OCI-LY7 (cell line): ENCODE measurements at regions of chr2 and their contacts with region 1.

Region 1: GRCh38 chr2:196171248-196171871 is at the start of gene STK17B:
- DNase-seq: peak; percentile 97
- H3K4me3 ChIP-seq: peak within 1 kb of the TSS; percentile 98
- H3K27ac ChIP-seq: peak within 1 kb of the TSS; percentile 99
- H3K4me1 ChIP-seq: peaks cover 37% of the 10 kb centered on the region
- CTCF ChIP-seq: no peak
- total RNA-seq, gene STK17B: 87.4 and 95.0 TPM in 2 replicates

Region 2: DNA sequence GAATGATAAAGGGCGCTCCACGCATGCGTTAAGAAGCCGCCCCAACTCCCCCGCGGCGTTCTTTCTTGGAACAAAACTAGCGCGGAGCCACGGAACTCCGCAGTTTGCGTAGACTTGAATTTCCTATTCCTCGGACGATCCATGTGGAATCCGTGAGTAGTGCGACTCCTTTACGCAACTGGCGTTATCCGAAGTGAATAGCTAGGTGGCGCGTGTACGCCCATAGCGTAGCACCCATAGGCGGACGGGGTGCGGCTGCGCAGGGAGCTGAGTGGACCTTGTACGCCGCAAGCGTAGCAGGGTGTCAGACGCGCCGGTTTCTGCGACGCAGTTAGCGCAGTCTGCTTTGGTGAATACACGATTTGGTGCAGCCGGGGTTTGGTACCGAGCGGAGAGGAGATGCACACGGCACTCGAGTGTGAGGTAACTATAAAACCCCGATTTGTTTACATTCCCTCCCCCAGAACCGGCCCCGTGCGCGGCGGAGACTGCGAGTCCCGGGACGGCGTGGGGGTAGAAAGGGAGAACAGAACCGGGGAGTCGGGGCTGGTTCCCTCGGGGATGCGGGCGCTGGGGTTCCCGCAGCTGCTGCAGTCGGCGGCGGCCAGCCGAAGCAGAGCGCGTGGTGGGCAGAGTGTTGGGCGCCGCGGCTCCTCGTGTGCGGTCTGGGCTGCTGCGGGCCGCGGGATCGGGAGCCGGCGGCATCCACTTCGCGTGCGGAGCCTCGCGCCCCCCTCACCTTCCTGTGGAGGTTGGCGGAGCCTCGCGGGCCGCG is 514.3 kb before region 1 on chr2 and contains the start of gene SLC39A10:
- CTCF ChIA-PET with region 1: no interaction called
- POLR2A ChIA-PET with region 1: no interaction called
- intact Hi-C with region 1: loop called (anchors 5 kb)
- DNase-seq: peak; percentile 97
- H3K4me3 ChIP-seq: peak within 1 kb of the TSS; percentile 93
- H3K27ac ChIP-seq: peak within 1 kb of the TSS; percentile 66
- H3K4me1 ChIP-seq: peaks cover 21% of the 10 kb centered on the region
- CTCF ChIP-seq: peak; percentile 35; the same call in 1 of the 2 replicates
- total RNA-seq, gene SLC39A10: 14.7 and 19.6 TPM in 2 replicates

Region 3: DNA sequence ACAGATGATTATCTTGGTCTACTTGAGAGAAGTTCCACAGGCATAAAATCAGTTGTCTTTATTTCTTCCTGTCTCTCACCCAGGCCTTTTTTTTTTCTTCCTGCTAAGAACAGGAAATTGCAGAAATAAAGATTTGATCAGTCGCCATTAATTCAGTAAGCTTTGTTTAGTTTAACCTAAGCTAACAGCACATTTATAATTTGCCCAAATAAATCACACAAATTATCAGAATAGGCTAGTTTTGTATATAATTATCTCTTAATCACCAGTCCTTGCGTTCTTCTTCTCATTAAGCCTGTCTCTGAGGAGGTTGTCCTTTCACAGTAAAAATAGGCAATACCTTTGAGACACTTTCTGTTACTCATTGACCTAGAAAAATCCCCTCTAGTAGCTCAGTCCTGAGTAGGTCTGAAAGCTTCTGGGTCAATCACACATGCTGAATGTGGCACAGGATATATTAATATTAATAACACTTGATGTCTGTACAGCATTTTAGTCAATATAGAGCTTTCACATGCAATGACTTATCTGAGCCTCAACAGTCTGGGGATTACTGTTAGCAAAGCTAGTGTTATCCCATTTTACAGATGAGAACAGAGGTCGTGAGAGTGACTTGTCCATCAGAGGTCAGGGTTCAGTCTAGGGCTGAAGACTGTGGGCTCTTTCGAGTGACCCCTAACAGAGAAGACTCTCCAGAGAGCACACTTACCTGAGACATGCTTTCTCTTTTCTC is 11.2 kb after region 1 on chr2:
- CTCF ChIA-PET with region 1: no interaction called
- POLR2A ChIA-PET with region 1: interaction called, 110 read pairs
- intact Hi-C with region 1: no loop called
- DNase-seq: peak; percentile 60
- H3K4me3 ChIP-seq: peak overlapping the region; percentile 31
- H3K27ac ChIP-seq: peak overlapping the region; percentile 82
- H3K4me1 ChIP-seq: peaks cover 98% of the 10 kb centered on the region
- CTCF ChIP-seq: no peak

Region 4: DNA sequence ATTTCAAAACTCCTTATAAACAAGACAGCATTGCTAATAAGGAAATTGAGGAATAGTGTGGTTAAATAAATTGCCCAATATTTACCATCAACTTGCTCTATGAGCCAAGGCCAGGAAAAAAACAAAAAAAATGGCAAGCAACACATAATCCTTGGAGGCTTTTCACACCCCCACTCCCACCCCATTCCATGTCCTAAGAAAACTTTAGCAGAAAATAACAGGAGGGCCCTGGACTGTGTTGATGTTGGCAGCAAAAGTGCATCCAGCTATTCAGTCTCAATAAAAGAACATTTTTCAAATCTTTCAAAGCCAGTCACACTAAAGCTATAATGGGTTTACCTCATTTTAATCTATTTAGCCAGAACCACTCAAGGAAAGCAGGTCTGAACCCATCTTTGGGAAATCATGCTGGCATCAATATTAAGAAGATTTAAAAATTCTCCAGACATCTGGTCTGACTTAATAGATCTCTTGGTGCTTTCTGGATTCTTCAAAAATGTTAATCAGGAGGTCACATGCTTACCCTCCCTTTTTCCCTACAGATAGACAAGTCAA is 34.6 kb after region 1 on chr2:
- CTCF ChIA-PET with region 1: interaction called, 3 read pairs
- POLR2A ChIA-PET with region 1: interaction called, 33 read pairs
- intact Hi-C with region 1: loop called (anchors 1 kb)
- DNase-seq: no peak
- H3K4me3 ChIP-seq: no peak overlapping the region
- H3K27ac ChIP-seq: no peak overlapping the region
- H3K4me1 ChIP-seq: peaks cover 55% of the 10 kb centered on the region
- CTCF ChIP-seq: no peak

Region 5: GRCh38 chr2:196249860-196250259 is 78.5 kb after region 1 on chr2:
- CTCF ChIA-PET with region 1: no interaction called
- POLR2A ChIA-PET with region 1: interaction called, 17 read pairs
- intact Hi-C with region 1: no loop called
- DNase-seq: peak; percentile 78
- H3K4me3 ChIP-seq: peak overlapping the region; percentile 0
- H3K27ac ChIP-seq: peak overlapping the region; percentile 19
- H3K4me1 ChIP-seq: peaks cover 49% of the 10 kb centered on the region
- CTCF ChIP-seq: 0 out of 2 replicates have a peak, but pooled peaks have one; percentile 20

Region 6: GRCh38 chr2:196268538-196269338 is 97.4 kb after region 1 on chr2:
- CTCF ChIA-PET with region 1: interaction called, 23 read pairs
- POLR2A ChIA-PET with region 1: interaction called, 226 read pairs
- intact Hi-C with region 1: no loop called
- DNase-seq: peak; percentile 48
- H3K4me3 ChIP-seq: peak overlapping the region; percentile 36
- H3K27ac ChIP-seq: peak overlapping the region; percentile 66
- H3K4me1 ChIP-seq: peaks cover 89% of the 10 kb centered on the region
- CTCF ChIP-seq: no peak

Region 7: GRCh38 chr2:197216361-197216979 is 1045.1 kb after region 1 on chr2:
- CTCF ChIA-PET with region 1: no interaction called
- POLR2A ChIA-PET with region 1: no interaction called
- intact Hi-C with region 1: loop called (anchors 10 kb)
- DNase-seq: peak; percentile 76
- H3K4me3 ChIP-seq: peak overlapping the region; percentile 45
- H3K27ac ChIP-seq: peak overlapping the region; percentile 96
- H3K4me1 ChIP-seq: peaks cover 71% of the 10 kb centered on the region
- CTCF ChIP-seq: no peak